ENCODE measurements at regions of chr2 and their contacts with region 1.

Region 1: GRCh38 chr2:237691908-237692600 is 64.7 kb downstream of the LRRFIP1 start:
- DNase-seq: peak; percentile 89 to 98 (median 96)
- ATAC-seq: peak; percentile 82 to 89 (median 85)
- H3K4me3 ChIP-seq: peak overlapping the region; percentile 53 to 94 (median 64)
- H3K27ac ChIP-seq: peak overlapping the region; percentile 81 to 95 (median 85)
- H3K4me1 ChIP-seq: peaks cover 10 to 29% (median 12%) of the 10 kb centered on the region in 3 donors
- H3K27me3 ChIP-seq: no peaks in the 10 kb centered on the region
- CTCF ChIP-seq: no peak

Region 2: GRCh38 chr2:237378650-237379049 is 313.4 kb before region 1 on chr2:
- intact Hi-C with region 1: no loop called
- DNase-seq: no peak
- ATAC-seq: no peak
- H3K4me3 ChIP-seq: no peak overlapping the region
- H3K27ac ChIP-seq: no peak overlapping the region
- H3K4me1 ChIP-seq: no peaks in the 10 kb centered on the region
- H3K27me3 ChIP-seq: no peaks in the 10 kb centered on the region
- CTCF ChIP-seq: no peak

Region 3: GRCh38 chr2:237782181-237782580 is 90.1 kb after region 1 on chr2:
- intact Hi-C with region 1: no loop called
- DNase-seq: no peak
- ATAC-seq: no peak
- H3K4me3 ChIP-seq: no peak overlapping the region
- H3K27ac ChIP-seq: no peak overlapping the region
- H3K4me1 ChIP-seq: no peaks in the 10 kb centered on the region
- H3K27me3 ChIP-seq: no peaks in the 10 kb centered on the region
- CTCF ChIP-seq: no peak

Region 4: GRCh38 chr2:238288650-238289573 is 596.9 kb after region 1 on chr2:
- intact Hi-C with region 1: no loop called
- DNase-seq: peak; percentile 94 to 99 (median 98)
- ATAC-seq: peak; percentile 54 to 80 (median 75)
- H3K4me3 ChIP-seq: peak overlapping the region; percentile 72 to 87 (median 84)
- H3K27ac ChIP-seq: peak overlapping the region; percentile 96 to 100 (median 98)
- H3K4me1 ChIP-seq: peaks cover 32 to 44% (median 37%) of the 10 kb centered on the region in 3 donors
- H3K27me3 ChIP-seq: no peaks in the 10 kb centered on the region
- CTCF ChIP-seq: peak in 1 of 4 donors; percentile 16

Region 5: DNA sequence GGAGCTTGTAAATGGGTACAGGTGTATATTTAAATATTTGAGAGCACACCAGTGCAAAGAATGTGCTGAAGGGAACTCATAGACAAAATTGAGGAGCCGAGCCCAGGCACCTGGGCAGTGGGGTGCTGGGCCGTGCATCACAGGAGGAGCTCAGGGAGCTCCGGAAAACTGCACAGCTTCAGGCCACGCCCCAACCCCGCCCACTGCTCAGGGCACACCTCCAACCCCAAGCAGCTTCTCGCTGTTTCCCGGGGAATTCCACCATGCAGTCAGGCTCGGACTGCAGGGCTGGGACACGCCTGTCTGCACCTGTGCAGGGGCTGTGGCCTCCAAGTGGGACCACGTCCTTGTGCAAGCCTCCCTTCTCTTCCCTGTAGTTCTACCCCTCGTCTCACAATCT is 1465.7 kb after region 1 on chr2:
- intact Hi-C with region 1: loop called in 1 of 3 experiments (anchors 5 kb)
- DNase-seq: peak in 4 of 6 donors; percentile 27 to 71 (median 48)
- ATAC-seq: peak in 3 of 4 donors; percentile 72 to 94 (median 81)
- H3K4me3 ChIP-seq: no peak overlapping the region
- H3K27ac ChIP-seq: no peak overlapping the region
- H3K4me1 ChIP-seq: no peaks in the 10 kb centered on the region
- H3K27me3 ChIP-seq: no peaks in the 10 kb centered on the region
- CTCF ChIP-seq: no peak